Testis (tissue), 5 donors: ENCODE measurements at regions of chr17 and their contacts with region 1.

Region 1: DNA sequence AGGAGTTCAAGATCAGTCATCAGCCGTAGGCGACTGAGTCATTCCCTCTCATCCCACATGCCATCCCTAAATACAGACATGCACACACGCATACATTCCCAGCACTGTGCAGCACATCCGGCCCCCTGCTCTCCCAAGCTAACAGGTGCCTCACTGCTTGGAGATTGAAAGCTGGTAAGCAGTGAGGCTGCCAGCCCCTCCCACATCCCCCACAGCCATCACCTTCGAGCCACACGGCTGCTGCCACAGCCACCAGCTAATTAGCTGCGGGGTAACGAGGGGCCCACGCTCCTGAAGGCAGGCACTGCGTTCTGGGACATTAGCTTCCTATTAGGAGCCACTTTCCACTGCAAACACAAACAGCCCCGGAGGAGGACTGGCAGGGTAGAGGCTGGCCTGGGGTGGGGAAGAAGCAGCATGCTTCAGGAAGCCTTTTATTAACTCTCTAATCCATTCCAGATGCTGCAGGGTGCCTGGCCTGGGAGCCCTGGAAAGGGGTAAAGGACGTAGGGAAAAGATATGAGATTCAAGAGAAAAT is 179.6 kb downstream of the CCT6B start:
- DNase-seq: no peak
- H3K4me3 ChIP-seq: no peak overlapping the region
- H3K27ac ChIP-seq: no peak overlapping the region
- H3K4me1 ChIP-seq: no peaks in the 10 kb centered on the region
- H3K27me3 ChIP-seq: no peaks in the 10 kb centered on the region
- CTCF ChIP-seq: no peak
- POLR2A ChIP-seq: no peak

Region 2: DNA sequence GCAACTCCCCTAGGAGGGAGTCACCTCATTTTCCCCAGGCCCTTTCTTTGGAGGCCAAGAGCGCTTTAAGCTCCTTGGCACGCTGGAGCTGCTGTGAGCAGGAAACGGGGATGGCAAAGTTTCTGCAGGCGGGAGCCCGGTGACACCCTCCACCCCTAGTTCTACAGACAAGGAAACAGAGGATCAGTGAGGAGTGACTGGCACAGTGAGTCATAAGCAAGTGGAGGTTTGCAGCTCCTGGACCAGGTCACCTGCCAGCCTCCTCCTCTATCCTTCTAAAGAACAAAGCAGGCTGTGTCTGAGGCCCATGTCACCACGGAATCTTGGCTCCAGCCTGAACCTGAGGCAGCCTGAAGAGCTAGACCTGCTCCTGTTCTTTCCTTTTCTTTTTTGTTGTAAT is 60.3 kb before region 1 on chr17:
- intact Hi-C with region 1: no loop called
- DNase-seq: peak; percentile 20
- H3K4me3 ChIP-seq: no peak overlapping the region
- H3K27ac ChIP-seq: no peak overlapping the region
- H3K4me1 ChIP-seq: no peaks in the 10 kb centered on the region
- H3K27me3 ChIP-seq: no peaks in the 10 kb centered on the region
- CTCF ChIP-seq: no peak
- POLR2A ChIP-seq: no peak

Region 3: GRCh38 chr17:34852614-34853013 is 71.0 kb after region 1 on chr17:
- intact Hi-C with region 1: loop called (anchors 10 kb)
- DNase-seq: no peak
- H3K4me3 ChIP-seq: no peak overlapping the region
- H3K27ac ChIP-seq: no peak overlapping the region
- H3K4me1 ChIP-seq: no peaks in the 10 kb centered on the region
- H3K27me3 ChIP-seq: no peaks in the 10 kb centered on the region
- CTCF ChIP-seq: no peak
- POLR2A ChIP-seq: no peak

Region 4: GRCh38 chr17:34913001-34913400 is 131.4 kb after region 1 on chr17:
- intact Hi-C with region 1: no loop called
- DNase-seq: no peak
- H3K4me3 ChIP-seq: no peak overlapping the region
- H3K27ac ChIP-seq: no peak overlapping the region
- H3K4me1 ChIP-seq: peaks cover 3% of the 10 kb centered on the region
- H3K27me3 ChIP-seq: no peaks in the 10 kb centered on the region
- CTCF ChIP-seq: no peak
- POLR2A ChIP-seq: no peak